GM18951 (cell line): ENCODE measurements at regions of chr5 and their contacts with region 1.

Region 1: GRCh38 chr5:59673438-59674058 is 220.0 kb downstream of the PDE4D start:
- POLR2A ChIP-seq: no peak

Region 2: GRCh38 chr5:59380350-59380951 is 293.1 kb before region 1 on chr5:
- in situ Hi-C with region 1: loop called (anchors 25 kb)
- POLR2A ChIP-seq: no peak